ENCODE measurements at regions of chrX and their contacts with region 1.

Region 1: GRCh38 chrX:111869639-111870034 is 6.3 kb upstream of the TRPC5OS start:
- DNase-seq: peak; percentile 15 to 28 (median 23)
- ATAC-seq: peak; percentile 86
- H3K4me3 ChIP-seq: no peak overlapping the region
- H3K27ac ChIP-seq: no peak overlapping the region
- H3K4me1 ChIP-seq: no peaks in the 10 kb centered on the region
- H3K27me3 ChIP-seq: no peaks in the 10 kb centered on the region
- CTCF ChIP-seq: peak; percentile 44 to 62 (median 60); a peak in 5 of 6 replicates
- EP300 ChIP-seq: no peak
- POLR2A ChIP-seq: no peak
- RAD21 ChIP-seq: peak; percentile 26 to 61; a peak in 3 of 4 replicates

Region 2: DNA sequence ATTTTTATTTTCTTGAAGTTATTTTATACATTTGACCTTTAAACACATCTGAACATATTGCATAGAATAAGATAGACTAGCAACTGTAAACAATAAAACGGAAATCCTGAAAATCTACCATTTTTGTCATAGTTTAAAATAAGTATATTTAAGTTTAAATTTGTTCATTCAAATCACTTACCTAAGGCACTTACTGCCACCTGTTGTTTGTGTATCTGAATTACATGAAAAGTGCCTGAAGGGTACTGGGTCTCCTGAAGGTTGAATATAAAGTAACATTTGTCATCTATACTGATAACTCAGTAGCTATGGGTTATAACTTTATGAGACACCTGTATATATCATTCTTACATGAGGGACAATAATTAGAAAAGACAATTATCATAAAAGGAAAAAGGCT is 174.4 kb after region 1 on chrX:
- CTCF ChIA-PET with region 1: no interaction called
- POLR2A ChIA-PET with region 1: no interaction called
- in situ Hi-C with region 1: no loop called
- intact Hi-C with region 1: loop called (anchors 10 kb)
- DNase-seq: peak in 3 of 4 experiments; percentile 4 to 23 (median 5)
- ATAC-seq: no peak
- H3K4me3 ChIP-seq: no peak overlapping the region
- H3K27ac ChIP-seq: no peak overlapping the region
- H3K4me1 ChIP-seq: no peaks in the 10 kb centered on the region
- H3K27me3 ChIP-seq: no peaks in the 10 kb centered on the region
- CTCF ChIP-seq: peak in 2 of 3 experiments; percentile 4 to 48; a peak in 3 of 6 replicates
- EP300 ChIP-seq: no peak
- POLR2A ChIP-seq: no peak
- RAD21 ChIP-seq: peak in 1 of 2 experiments; percentile 47; a peak in 2 of 4 replicates

Region 3: GRCh38 chrX:112147206-112147605 is 277.6 kb after region 1 on chrX:
- CTCF ChIA-PET with region 1: no interaction called
- POLR2A ChIA-PET with region 1: no interaction called
- in situ Hi-C with region 1: no loop called
- intact Hi-C with region 1: loop called (anchors 10 kb)
- DNase-seq: peak; percentile 7 to 11 (median 10)
- ATAC-seq: peak; percentile 41; the same call in 1 of the 3 replicates
- H3K4me3 ChIP-seq: no peak overlapping the region
- H3K27ac ChIP-seq: no peak overlapping the region
- H3K4me1 ChIP-seq: no peaks in the 10 kb centered on the region
- H3K27me3 ChIP-seq: no peaks in the 10 kb centered on the region
- CTCF ChIP-seq: peak in 1 of 3 experiments; percentile 24; a peak in 1 of 6 replicates
- EP300 ChIP-seq: no peak
- POLR2A ChIP-seq: no peak
- RAD21 ChIP-seq: no peak

Region 4: DNA sequence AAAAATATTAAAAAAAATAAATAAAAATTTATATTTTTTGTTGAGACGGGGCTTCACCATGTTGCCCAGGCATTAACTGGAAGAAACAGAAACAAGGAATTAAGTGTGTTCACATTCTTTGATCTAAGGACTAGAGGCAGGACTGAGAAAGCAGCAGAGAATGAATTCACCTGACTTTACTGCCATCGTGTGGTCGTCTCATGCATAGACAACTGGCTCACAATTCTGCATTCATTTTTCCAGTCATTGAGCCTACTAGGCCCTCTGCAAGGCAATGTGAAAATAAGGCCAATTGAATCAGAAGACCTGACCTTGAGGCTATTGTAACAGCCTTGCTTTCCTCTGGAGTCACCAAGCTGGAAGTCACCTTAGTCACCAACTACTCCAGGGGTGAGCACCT is 772.7 kb after region 1 on chrX:
- CTCF ChIA-PET with region 1: interaction called, 3 read pairs
- POLR2A ChIA-PET with region 1: no interaction called
- in situ Hi-C with region 1: no loop called
- intact Hi-C with region 1: loop called (anchors 2 kb)
- DNase-seq: peak; percentile 17 to 49 (median 24)
- ATAC-seq: peak; percentile 85
- H3K4me3 ChIP-seq: no peak overlapping the region
- H3K27ac ChIP-seq: no peak overlapping the region
- H3K4me1 ChIP-seq: no peaks in the 10 kb centered on the region
- H3K27me3 ChIP-seq: no peaks in the 10 kb centered on the region
- CTCF ChIP-seq: peak; percentile 59 to 68 (median 64)
- EP300 ChIP-seq: no peak
- POLR2A ChIP-seq: no peak
- RAD21 ChIP-seq: peak in 1 of 2 experiments; percentile 62; a peak in 3 of 4 replicates